A673 (cell line): ENCODE measurements at regions of chr10 and their contacts with region 1.

Region 1: DNA sequence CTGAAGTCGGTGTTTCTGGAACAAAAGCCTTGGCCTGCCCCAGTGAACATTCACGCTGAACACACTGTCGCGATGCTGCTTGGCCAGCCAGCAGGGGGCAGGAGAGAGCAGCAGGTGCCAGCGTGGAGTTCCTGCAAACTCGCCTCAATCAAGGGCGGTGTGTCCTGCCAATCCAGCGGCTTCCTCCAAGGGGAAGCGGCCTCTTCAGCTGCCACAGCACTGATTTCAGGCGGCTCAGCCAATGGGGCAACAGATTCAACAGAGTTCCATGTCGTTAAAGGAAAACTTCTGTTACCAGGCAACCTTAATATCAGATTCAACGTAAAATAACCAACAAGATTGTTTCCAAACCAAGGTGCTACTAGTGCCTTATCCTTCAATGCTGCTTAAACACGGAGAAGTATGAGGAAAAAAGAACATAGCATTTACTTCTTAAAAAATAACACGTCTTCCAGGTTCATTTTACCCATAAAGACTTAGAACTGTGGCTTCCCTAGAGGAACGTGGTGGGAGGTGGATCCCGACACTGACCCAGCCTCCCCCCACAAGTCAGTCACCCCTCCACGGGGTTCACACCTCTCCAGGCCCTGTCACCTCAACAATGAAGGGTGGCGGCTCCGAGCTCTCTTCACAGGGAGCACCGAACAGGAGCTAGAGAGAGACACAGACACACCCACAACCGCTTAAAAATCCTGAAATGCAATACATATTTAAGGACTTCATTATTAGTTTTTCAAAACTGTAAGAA is 178.2 kb downstream of the DIP2C start:
- DNase-seq: peak; percentile 94
- H3K4me3 ChIP-seq: no peak overlapping the region
- H3K27ac ChIP-seq: no peak overlapping the region
- H3K4me1 ChIP-seq: peaks cover 5% of the 10 kb centered on the region
- H3K27me3 ChIP-seq: no peaks in the 10 kb centered on the region
- CTCF ChIP-seq: peak; percentile 99

Region 2: GRCh38 chr10:329361-330099 is 181.7 kb before region 1 on chr10:
- CTCF ChIA-PET with region 1: no interaction called
- POLR2A ChIA-PET with region 1: no interaction called
- intact Hi-C with region 1: no loop called
- DNase-seq: peak; percentile 85
- H3K4me3 ChIP-seq: peak overlapping the region; percentile 28
- H3K27ac ChIP-seq: peak overlapping the region; percentile 64
- H3K4me1 ChIP-seq: peaks cover 27% of the 10 kb centered on the region
- H3K27me3 ChIP-seq: no peaks in the 10 kb centered on the region
- CTCF ChIP-seq: 0 out of 2 replicates have a peak, but pooled peaks have one; percentile 16

Region 3: DNA sequence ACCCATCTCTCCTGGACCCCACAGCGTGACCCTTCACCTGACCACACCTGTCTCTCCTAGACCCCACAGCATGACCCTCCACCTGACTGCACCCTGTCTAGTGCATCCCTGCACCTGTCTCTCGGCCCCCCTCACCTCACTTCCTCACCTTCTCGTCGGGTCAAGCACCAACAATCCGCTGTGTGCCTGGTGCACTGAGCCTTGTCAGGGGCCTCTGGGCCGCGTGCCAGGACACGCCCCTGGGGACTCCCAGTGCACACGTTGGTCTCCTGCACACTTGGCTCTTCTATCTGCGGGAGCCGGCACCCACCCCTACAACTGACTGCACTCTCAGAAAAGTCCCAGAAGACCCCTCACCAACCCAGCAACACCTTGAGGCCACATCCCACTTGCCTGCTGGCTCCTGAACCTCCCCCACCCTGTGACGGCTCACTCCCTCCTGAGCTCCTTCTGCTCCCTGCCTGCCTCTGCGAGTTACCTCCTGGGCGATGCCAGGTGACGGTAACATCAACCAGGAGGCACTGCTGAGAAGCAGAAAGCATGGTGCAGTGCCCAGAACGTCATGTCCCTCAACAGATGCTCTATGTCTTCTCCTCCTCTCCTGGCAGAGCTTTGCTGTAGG is 30.6 kb after region 1 on chr10:
- CTCF ChIA-PET with region 1: interaction called, 21 read pairs
- POLR2A ChIA-PET with region 1: no interaction called
- intact Hi-C with region 1: no loop called
- DNase-seq: no peak
- H3K4me3 ChIP-seq: no peak overlapping the region
- H3K27ac ChIP-seq: no peak overlapping the region
- H3K4me1 ChIP-seq: peaks cover 8% of the 10 kb centered on the region
- H3K27me3 ChIP-seq: no peaks in the 10 kb centered on the region
- CTCF ChIP-seq: no peak

Region 4: GRCh38 chr10:689433-690371 is 178.4 kb after region 1 on chr10 and contains the start of gene DIP2C:
- CTCF ChIA-PET with region 1: no interaction called
- POLR2A ChIA-PET with region 1: no interaction called
- intact Hi-C with region 1: loop called (anchors 10 kb)
- DNase-seq: peak; percentile 78
- H3K4me3 ChIP-seq: peak within 1 kb of the TSS; percentile 75
- H3K27ac ChIP-seq: peak within 1 kb of the TSS; percentile 78
- H3K4me1 ChIP-seq: peaks cover 10% of the 10 kb centered on the region
- H3K27me3 ChIP-seq: no peaks in the 10 kb centered on the region
- CTCF ChIP-seq: no peak
- total RNA-seq, gene DIP2C: 13.2 and 16.5 TPM in 2 replicates

Region 5: DNA sequence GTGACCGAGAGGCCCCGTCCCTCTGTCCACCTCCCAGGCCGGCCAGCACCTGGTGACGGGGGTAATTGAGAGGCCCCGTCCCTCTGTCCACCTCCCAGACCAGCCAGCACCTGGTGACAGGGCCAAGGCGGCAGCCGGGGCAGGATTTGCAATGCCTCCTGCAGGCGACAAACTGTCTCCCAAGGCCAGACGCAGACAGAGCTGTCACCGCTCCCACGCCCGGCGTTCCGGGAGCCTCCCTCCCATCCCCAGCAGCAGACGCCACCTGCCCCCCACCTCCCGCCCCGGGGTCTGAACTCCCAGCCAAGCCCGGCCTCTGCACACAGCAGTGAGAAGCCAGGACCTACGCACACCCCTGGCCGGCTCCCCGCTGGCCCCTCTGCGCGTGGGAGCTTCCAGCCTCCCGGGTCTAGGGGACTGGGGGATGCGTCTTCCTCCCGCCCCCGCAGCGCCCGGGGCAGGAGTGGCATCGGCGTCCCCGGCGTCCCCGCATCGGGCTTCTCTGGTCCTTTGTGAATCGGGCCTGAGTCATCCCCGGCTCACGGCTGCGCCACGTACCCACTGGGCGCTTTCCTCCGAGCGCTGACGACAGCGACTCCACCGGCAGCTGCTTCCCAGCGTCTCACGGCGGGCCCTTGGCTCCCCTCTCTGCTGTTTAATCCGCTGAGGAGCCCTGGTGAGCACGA is 273.3 kb after region 1 on chr10:
- CTCF ChIA-PET with region 1: interaction called, 3 read pairs
- POLR2A ChIA-PET with region 1: no interaction called
- intact Hi-C with region 1: loop called (anchors 5 kb)
- DNase-seq: peak; percentile 87
- H3K4me3 ChIP-seq: peak overlapping the region; percentile 44
- H3K27ac ChIP-seq: no peak overlapping the region
- H3K4me1 ChIP-seq: no peaks in the 10 kb centered on the region
- H3K27me3 ChIP-seq: no peaks in the 10 kb centered on the region
- CTCF ChIP-seq: peak; percentile 41

Region 6: GRCh38 chr10:810351-810846 is 299.1 kb after region 1 on chr10:
- CTCF ChIA-PET with region 1: no interaction called
- POLR2A ChIA-PET with region 1: no interaction called
- intact Hi-C with region 1: loop called (anchors 10 kb)
- DNase-seq: peak; percentile 30
- H3K4me3 ChIP-seq: no peak overlapping the region
- H3K27ac ChIP-seq: no peak overlapping the region
- H3K4me1 ChIP-seq: no peaks in the 10 kb centered on the region
- H3K27me3 ChIP-seq: no peaks in the 10 kb centered on the region
- CTCF ChIP-seq: peak; percentile 58

Region 7: GRCh38 chr10:920450-920849 is 409.2 kb after region 1 on chr10:
- CTCF ChIA-PET with region 1: no interaction called
- POLR2A ChIA-PET with region 1: interaction called, 15 read pairs
- intact Hi-C with region 1: no loop called
- DNase-seq: no peak
- H3K4me3 ChIP-seq: no peak overlapping the region
- H3K27ac ChIP-seq: no peak overlapping the region
- H3K4me1 ChIP-seq: no peaks in the 10 kb centered on the region
- H3K27me3 ChIP-seq: no peaks in the 10 kb centered on the region
- CTCF ChIP-seq: no peak

Region 8: DNA sequence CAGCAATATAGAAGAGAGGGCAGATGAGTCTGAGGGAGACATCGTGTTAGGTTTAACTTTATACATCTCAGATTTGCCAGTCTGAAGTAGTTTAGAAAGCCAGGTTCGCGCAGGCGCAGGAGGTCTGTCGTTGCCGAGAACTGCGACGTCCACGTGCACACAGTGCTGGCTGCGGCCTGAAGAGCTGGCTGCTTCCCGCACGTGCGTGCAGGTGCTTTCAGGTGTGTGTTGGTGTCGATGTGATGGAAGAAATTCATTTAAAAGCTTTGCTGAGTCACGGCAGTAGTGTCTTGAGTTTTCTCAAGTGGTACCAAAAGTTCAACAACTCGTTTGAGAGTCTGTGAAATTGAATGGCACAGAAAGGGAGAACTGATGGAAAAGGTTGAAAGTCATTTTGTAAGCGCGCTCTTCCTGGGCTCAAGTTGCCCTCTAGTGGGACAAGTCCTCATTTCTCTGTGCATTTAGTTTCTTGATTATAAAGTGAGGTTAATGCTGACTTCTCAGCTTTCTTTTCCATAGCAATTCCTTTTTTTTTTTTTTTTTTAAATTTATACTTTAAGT is 563.6 kb after region 1 on chr10:
- CTCF ChIA-PET with region 1: interaction called, 14 read pairs
- POLR2A ChIA-PET with region 1: no interaction called
- intact Hi-C with region 1: no loop called
- DNase-seq: peak; percentile 29
- H3K4me3 ChIP-seq: no peak overlapping the region
- H3K27ac ChIP-seq: no peak overlapping the region
- H3K4me1 ChIP-seq: no peaks in the 10 kb centered on the region
- H3K27me3 ChIP-seq: no peaks in the 10 kb centered on the region
- CTCF ChIP-seq: peak; percentile 43